BJ (cell line): ENCODE measurements at regions of chr19 and their contacts with region 1.

Region 1: DNA sequence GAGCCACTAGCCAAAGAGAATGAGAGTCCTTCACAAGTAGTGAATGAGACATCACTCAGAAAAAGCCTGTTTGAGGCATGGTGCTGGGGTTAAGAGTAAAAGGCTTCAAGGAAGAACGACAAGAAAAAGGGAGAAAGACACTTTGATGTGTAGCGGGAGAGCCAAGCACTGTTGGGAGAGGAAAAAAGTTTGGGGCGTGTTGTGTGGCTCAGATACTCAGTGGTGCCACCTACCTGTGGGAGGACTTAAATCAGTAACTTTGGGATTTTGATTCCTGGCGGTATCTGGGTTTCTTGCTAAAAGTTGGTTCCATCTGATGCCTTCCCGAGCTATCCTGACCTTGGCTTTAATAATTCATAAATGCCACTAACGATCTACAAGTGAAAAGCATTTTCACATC is 12.3 kb downstream of the ELSPBP1 start:
- DNase-seq: no peak
- H3K4me3 ChIP-seq: no peak overlapping the region
- H3K27me3 ChIP-seq: no peaks in the 10 kb centered on the region
- CTCF ChIP-seq: 0 out of 2 replicates have a peak, but pooled peaks have one; percentile 12

Region 2: GRCh38 chr19:48029431-48029830 is 22.7 kb after region 1 on chr19:
- CTCF ChIA-PET with region 1: no interaction called
- POLR2A ChIA-PET with region 1: interaction called, 10 read pairs
- DNase-seq: no peak
- H3K4me3 ChIP-seq: no peak overlapping the region
- H3K27me3 ChIP-seq: peaks cover 2% of the 10 kb centered on the region
- CTCF ChIP-seq: no peak